Mammary epithelial cell (primary cell): ENCODE measurements at regions of chr16 and their contacts with region 1.

Region 1: GRCh38 chr16:16928532-16929109 is 542.1 kb downstream of the XYLT1 start:
- DNase-seq: no peak
- H3K4me3 ChIP-seq: no peak overlapping the region
- H3K27ac ChIP-seq: no peak overlapping the region
- H3K4me1 ChIP-seq: no peaks in the 10 kb centered on the region
- H3K27me3 ChIP-seq: no peaks in the 10 kb centered on the region
- CTCF ChIP-seq: no peak

Region 2: DNA sequence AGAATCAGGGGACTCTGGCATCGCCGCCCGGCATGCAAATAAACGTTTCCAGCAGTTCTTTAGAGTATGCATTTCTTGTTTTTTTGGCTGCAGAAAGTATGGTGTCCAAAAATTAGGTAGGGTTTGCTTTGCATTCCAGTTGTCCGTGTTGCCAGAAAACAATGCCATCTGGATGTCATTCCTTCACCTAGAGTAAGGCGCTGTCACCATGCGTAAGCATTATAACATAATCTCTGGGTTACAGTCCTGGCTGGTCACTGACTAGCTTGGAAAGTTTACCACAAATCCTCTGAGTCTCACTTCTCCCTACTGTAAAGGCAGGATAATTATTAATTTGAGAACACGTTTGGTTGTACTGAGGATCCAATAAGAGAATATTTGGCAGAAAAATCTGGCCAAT is 84.4 kb after region 1 on chr16:
- CTCF ChIA-PET with region 1: no interaction called
- dilution Hi-C with region 1: no loop called
- in situ Hi-C with region 1: no loop called
- intact Hi-C with region 1: no loop called
- DNase-seq: no peak
- H3K4me3 ChIP-seq: no peak overlapping the region
- H3K27ac ChIP-seq: no peak overlapping the region
- H3K4me1 ChIP-seq: no peaks in the 10 kb centered on the region
- H3K27me3 ChIP-seq: no peaks in the 10 kb centered on the region
- CTCF ChIP-seq: no peak

Region 3: GRCh38 chr16:17026600-17027242 is 98.1 kb after region 1 on chr16:
- CTCF ChIA-PET with region 1: no interaction called
- dilution Hi-C with region 1: no loop called
- in situ Hi-C with region 1: loop called in 1 of 2 experiments (anchors 25 kb)
- intact Hi-C with region 1: no loop called
- DNase-seq: no peak
- H3K4me3 ChIP-seq: no peak overlapping the region
- H3K27ac ChIP-seq: no peak overlapping the region
- H3K4me1 ChIP-seq: no peaks in the 10 kb centered on the region
- H3K27me3 ChIP-seq: no peaks in the 10 kb centered on the region
- CTCF ChIP-seq: no peak